AG04449 (cell line): ENCODE measurements at regions of chr9 and their contacts with region 1.

Region 1: DNA sequence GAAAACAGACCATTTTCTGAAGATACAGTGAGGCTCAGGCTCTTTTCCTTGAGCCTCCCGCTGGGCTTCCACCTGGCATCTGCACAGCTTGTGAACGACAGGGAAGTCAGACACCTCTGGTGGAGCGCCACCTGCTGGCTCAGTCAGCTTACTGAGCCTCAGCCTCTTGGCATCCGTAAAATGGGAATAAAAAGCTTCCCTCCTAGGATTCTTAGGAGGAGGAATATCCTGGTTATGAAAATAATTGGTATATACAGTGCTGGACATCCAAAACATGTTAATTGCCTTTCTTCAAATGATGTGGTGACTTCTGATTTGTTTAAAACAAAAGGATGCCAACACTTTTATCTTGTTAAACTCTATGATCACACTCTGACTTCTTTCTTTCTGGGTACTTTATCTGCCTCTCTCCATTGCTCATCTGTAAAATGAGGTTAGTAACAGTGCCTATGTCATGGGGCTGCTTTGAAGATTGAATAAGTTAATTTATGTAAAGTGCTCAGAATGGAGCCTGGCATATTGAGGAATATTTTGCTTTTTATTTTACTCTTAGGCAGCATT is 67.5 kb downstream of the MAMDC2 start:
- DNase-seq: no peak
- H3K4me3 ChIP-seq: no peak overlapping the region
- CTCF ChIP-seq: peak; percentile 79

Region 2: DNA sequence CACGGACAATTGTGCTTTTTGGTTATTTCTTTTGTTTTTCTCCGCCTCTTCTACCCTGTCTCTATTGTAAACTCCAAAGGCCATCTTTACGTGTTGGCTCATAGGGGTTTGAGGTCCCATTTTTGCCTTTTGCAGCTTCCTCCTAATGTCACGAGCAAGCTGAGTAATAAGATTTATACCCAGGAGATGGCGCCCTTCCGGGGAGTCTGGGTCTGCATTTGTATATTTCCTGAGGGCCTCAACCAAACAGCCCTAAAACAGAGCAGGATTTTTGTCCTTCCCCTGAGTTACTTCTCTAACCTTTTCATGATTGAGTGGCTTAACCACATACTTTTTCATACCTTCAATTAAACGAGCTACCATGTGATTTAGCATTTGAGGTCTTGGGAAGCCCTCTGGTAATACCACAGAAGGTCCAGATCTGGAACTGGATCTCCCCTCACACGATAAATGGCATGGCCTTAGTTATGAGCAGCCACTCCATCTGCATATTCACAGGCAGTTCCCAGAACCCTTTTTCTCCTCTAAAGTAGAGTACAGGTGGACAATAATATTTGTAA is 301.7 kb before region 1 on chr9:
- CTCF ChIA-PET with region 1: interaction called, 17 read pairs
- POLR2A ChIA-PET with region 1: no interaction called
- DNase-seq: no peak
- H3K4me3 ChIP-seq: no peak overlapping the region
- CTCF ChIP-seq: peak; percentile 18

Region 3: DNA sequence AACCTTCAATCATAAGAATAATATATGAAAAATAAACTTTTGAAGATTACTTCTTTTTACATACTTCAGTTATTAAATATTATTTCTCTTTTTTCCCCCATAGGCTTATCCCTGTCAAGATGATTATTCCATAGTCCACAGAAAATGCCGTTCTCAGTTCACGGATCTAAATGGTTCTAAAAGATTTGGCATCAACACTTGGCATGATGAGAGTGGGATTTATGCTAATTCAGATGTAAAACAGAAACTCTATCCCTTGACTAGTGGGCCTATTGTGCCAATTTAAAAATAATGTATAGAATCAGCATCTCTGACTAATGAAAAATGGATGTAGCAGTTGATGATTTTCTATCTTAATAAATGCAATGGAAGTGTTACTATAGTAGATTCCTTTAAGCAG is 205.3 kb before region 1 on chr9:
- CTCF ChIA-PET with region 1: no interaction called
- POLR2A ChIA-PET with region 1: no interaction called
- DNase-seq: no peak
- H3K4me3 ChIP-seq: no peak overlapping the region
- CTCF ChIP-seq: no peak

Region 4: GRCh38 chr9:69945671-69946141 is 165.4 kb before region 1 on chr9:
- CTCF ChIA-PET with region 1: interaction called, 64 read pairs
- POLR2A ChIA-PET with region 1: no interaction called
- DNase-seq: no peak
- H3K4me3 ChIP-seq: no peak overlapping the region
- CTCF ChIP-seq: no peak

Region 5: GRCh38 chr9:70003901-70004714 is 107.0 kb before region 1 on chr9:
- CTCF ChIA-PET with region 1: interaction called, 13 read pairs
- POLR2A ChIA-PET with region 1: no interaction called
- DNase-seq: peak; percentile 57
- H3K4me3 ChIP-seq: no peak overlapping the region
- CTCF ChIP-seq: no peak

Region 6: DNA sequence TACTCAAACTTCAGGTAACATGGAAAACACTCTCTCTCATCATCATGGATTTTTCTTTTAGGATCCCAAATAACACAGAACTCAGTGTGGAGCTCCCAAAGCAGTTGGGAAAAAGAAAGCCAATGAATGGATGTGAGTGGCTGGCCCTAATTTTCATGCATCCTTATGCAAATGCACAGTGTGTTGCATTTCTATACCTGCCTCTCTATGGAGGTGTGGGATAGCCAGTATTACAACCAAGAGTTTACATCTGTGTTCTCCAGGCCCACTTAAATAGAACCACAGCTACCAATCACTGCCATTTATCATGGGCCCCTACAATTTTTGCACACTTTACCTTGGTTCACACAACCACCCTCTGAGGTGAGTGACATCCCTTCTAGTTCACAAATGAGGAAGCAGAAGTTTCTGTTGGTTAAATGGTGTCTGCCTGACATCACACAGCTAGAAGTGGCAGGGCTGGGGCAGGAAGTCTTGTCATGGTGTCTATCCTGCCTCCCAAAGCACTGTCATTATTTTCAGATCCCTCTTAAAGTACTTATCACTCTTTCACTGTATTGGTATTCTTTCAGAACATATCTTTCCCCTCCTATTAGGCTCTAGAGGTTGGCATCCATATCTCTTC is 50.1 kb before region 1 on chr9:
- CTCF ChIA-PET with region 1: interaction called, 21 read pairs
- POLR2A ChIA-PET with region 1: no interaction called
- DNase-seq: no peak
- H3K4me3 ChIP-seq: no peak overlapping the region
- CTCF ChIP-seq: no peak

Region 7: DNA sequence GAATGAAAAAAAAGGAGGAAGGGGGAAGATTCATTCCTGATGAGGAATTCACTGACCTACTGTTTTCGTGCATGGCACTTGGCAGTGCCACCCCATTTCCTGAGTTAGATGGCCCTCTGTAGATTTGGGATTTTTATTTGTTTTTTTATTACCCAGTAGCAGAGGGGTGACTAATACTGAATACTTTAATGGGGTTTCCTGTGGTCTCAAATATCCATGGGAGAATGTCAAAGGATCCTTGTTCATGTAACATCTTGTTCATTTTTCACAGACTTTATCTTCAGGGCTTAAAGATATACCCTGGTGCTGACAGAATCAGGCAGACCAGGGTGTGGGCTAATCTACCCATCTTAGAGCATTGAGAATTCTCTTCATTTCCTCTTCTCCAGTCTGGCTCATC is 25.5 kb after region 1 on chr9:
- CTCF ChIA-PET with region 1: interaction called, 126 read pairs
- POLR2A ChIA-PET with region 1: no interaction called
- DNase-seq: no peak
- H3K4me3 ChIP-seq: no peak overlapping the region
- CTCF ChIP-seq: no peak

Region 8: GRCh38 chr9:70374962-70375618 is 264.0 kb after region 1 on chr9:
- CTCF ChIA-PET with region 1: no interaction called
- POLR2A ChIA-PET with region 1: no interaction called
- DNase-seq: no peak
- H3K4me3 ChIP-seq: no peak overlapping the region
- CTCF ChIP-seq: no peak

Region 9: DNA sequence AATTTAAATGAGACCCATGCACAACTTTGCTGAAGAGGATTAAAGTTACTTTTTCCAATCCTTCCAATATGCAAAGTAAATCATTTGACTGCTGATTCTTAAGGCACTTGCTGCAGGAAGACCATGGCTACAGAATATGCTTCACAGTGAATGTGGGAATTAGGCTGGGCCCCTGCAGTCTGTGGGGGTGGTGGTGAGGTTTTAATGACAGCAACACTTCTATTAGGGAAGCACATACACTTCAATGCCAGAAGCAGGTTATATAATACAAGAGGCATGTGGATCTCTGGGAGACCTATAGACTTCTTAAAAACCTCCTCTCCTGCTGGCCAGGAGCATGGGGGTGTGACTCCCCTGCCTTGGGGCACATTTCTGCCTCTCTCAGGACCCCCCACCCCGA is 427.9 kb after region 1 on chr9:
- CTCF ChIA-PET with region 1: no interaction called
- POLR2A ChIA-PET with region 1: no interaction called
- DNase-seq: no peak
- H3K4me3 ChIP-seq: no peak overlapping the region
- CTCF ChIP-seq: no peak

Region 10: DNA sequence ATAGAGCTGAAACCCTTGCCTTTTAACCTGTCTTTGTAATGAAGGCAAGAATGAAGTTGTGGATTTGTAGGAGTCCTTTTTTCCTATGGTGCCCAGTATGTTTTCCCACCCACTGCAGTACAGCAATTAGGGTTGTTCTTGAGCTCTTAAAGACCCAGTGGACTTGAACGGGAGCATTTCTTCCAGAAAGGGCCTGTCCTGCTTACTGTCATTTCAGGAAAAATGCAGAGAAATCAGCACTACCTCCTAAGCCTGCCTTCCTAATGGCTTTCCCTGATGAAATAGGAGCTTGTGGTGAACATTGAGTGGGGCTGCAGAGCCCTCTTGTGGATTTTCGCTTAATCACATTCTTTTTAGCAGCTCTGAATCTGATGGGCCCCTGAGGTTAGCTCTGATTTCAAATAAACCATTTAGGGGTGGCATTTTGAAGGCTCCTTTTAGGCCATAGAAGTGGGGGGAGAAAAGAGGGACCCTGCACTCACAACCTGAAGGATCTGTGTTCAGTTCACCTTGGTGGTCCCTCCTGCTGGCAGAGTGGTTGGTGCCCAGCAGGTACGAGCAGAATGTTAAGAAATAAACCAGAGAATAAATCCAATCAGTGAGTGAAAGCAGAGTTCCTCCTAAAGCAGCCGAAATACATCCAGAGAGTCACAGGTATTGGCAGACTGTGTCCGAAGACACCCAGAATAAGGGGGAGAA is 491.3 kb after region 1 on chr9:
- CTCF ChIA-PET with region 1: interaction called, 16 read pairs
- POLR2A ChIA-PET with region 1: no interaction called
- DNase-seq: peak; percentile 61
- H3K4me3 ChIP-seq: no peak overlapping the region; the same call in 1 of the 2 replicates
- CTCF ChIP-seq: peak; percentile 64